PC-3 (cell line): ENCODE measurements at regions of chr7 and their contacts with region 1.

Region 1: GRCh38 chr7:139680676-139681462 is 96.9 kb downstream of the HIPK2 start:
- DNase-seq: peak; percentile 98
- ATAC-seq: peak; percentile 66
- H3K4me3 ChIP-seq: peak overlapping the region; percentile 17; the same call in 1 of the 2 replicates
- H3K27ac ChIP-seq: peak overlapping the region; percentile 100
- H3K4me1 ChIP-seq: peaks cover 61% of the 10 kb centered on the region
- H3K27me3 ChIP-seq: no peaks in the 10 kb centered on the region
- CTCF ChIP-seq: no peak

Region 2: DNA sequence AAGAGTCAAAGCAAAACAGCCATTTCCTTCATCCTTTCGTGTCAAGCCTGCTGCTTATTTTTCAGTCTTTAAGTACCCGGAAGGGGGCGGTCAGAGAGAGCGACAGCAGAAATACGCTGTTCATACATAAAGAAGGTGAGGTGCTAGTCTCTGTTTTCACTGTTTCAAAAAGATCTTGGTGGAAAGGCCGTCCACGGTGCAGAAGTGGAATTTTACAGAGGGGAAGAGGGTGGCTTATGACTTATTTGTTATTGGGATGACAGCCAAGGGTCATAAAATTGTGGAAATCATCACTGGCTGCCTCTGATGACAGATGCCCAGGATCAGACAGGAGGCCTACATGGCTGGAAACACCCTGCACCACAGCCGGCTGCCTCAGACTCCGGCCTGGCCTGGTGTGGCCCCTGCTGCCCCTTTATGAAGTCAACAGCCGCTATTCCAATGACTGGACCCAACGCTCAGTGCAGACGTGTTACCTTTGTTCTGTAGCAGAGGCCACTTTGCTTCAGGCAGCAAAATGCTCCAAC is 39.9 kb after region 1 on chr7:
- CTCF ChIA-PET with region 1: no interaction called
- POLR2A ChIA-PET with region 1: interaction called, 3 read pairs
- intact Hi-C with region 1: loop called (anchors 2 kb)
- DNase-seq: peak; percentile 81
- ATAC-seq: peak; percentile 85
- H3K4me3 ChIP-seq: no peak overlapping the region
- H3K27ac ChIP-seq: peak overlapping the region; percentile 54
- H3K4me1 ChIP-seq: peaks cover 50% of the 10 kb centered on the region
- H3K27me3 ChIP-seq: no peaks in the 10 kb centered on the region
- CTCF ChIP-seq: no peak